Activated CD4-positive, alpha-beta memory T cell treated with anti-CD3 and anti-CD28 coated beads for 36 hours (primary cell): ENCODE measurements at regions of chr9 and their contacts with region 1.

Region 1: DNA sequence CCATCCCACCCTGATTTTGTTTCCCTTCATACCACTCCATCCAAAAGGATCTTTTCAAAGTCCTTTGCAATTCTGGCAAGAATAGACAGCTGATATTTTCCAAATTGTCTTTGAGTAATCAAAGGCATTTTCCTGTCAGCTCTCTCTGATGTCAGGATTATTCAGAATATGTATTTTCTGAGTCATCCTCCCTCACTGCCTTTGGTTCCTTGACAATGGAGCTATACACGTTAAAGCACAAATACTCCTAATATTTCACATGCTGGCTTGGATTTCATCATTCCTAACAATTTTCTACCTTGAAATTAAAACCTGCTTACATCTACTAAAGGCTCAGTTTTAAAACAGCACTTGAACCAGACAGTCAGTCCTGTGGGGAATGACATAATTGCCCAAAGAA is 379.4 kb downstream of the GADD45G start:
- DNase-seq: no peak
- H3K4me3 Mint-ChIP-seq: peak overlapping the region; percentile 11
- H3K27ac Mint-ChIP-seq: peak overlapping the region; percentile 79
- H3K4me1 Mint-ChIP-seq: peaks cover 49% of the 10 kb centered on the region
- H3K27me3 Mint-ChIP-seq: peaks cover 33% of the 10 kb centered on the region

Region 2: GRCh38 chr9:89738137-89738932 is 245.9 kb before region 1 on chr9:
- CTCF ChIA-PET with region 1: no interaction called
- POLR2A ChIA-PET with region 1: no interaction called
- intact Hi-C with region 1: loop called (anchors 1 kb)
- DNase-seq: no peak
- H3K4me3 Mint-ChIP-seq: no peak overlapping the region
- H3K27ac Mint-ChIP-seq: no peak overlapping the region
- H3K4me1 Mint-ChIP-seq: peaks cover 48% of the 10 kb centered on the region
- H3K27me3 Mint-ChIP-seq: no peaks in the 10 kb centered on the region

Region 3: DNA sequence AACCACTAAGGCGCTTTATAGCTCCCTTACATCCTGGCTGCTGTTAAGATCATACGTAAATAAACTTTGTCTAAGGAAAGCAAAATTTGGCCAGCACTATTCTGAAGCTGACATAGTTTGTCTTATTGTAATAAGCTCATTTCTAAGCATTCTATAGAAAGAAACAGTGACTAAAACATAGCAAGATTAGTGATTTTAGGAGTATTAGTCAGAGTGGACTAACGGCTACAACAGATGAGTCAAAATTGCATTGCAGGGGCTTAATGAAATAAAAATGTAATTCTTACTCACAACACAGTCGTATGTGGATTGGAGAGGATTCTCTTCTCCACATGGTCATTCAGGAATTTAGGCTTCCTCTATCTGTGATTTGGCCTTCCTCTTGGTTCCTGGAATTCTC is 31.8 kb before region 1 on chr9:
- CTCF ChIA-PET with region 1: no interaction called
- POLR2A ChIA-PET with region 1: interaction called, 10 read pairs
- intact Hi-C with region 1: loop called (anchors 1 kb)
- DNase-seq: no peak
- H3K4me3 Mint-ChIP-seq: no peak overlapping the region
- H3K27ac Mint-ChIP-seq: peak overlapping the region; percentile 64
- H3K4me1 Mint-ChIP-seq: peaks cover 22% of the 10 kb centered on the region
- H3K27me3 Mint-ChIP-seq: peaks cover 2% of the 10 kb centered on the region

Region 4: GRCh38 chr9:89999534-90000370 is 15.5 kb after region 1 on chr9:
- CTCF ChIA-PET with region 1: interaction called, 3 read pairs
- POLR2A ChIA-PET with region 1: interaction called, 3 read pairs
- intact Hi-C with region 1: loop called (anchors 1 kb)
- DNase-seq: peak; percentile 85
- H3K4me3 Mint-ChIP-seq: peak overlapping the region; percentile 63
- H3K27ac Mint-ChIP-seq: peak overlapping the region; percentile 73
- H3K4me1 Mint-ChIP-seq: peaks cover 34% of the 10 kb centered on the region
- H3K27me3 Mint-ChIP-seq: no peaks in the 10 kb centered on the region